ENCODE measurements at regions of chr17 and their contacts with region 1.

Region 1: DNA sequence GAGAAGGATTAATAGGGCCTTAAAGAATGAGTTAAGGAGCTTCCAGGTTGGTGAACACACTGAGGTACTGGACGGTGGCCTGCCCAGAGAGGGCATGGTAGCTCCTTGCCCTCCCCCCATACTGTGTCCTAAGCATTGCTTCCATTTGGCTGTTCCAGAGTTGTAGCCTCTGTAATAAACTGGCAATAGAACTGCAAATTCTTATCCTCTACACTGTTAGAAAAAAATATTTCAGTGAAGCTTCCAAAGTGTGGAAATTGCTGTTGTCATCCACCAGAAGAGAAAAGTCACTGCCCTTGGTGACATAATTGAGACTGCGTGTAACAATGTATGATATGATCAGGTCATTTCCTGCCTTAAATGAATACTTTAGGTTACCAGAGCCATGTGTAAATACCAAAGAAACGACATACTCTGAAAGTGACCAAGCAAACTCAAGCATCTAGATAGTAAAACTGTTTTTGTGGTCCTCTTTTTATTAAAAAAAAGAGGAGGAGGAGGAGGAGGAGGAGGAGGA is 65.9 kb downstream of the CEP95 start:
- DNase-seq: no peak
- ATAC-seq: peak; percentile 92
- H3K4me3 Mint-ChIP-seq: peak overlapping the region; percentile 10
- H3K27ac Mint-ChIP-seq: peak overlapping the region; percentile 73
- H3K4me1 Mint-ChIP-seq: peaks cover 12% of the 10 kb centered on the region
- H3K27me3 Mint-ChIP-seq: no peaks in the 10 kb centered on the region

Region 2: GRCh38 chr17:64635647-64636307 is 63.1 kb after region 1 on chr17:
- CTCF ChIA-PET with region 1: interaction called, 4 read pairs
- POLR2A ChIA-PET with region 1: no interaction called
- intact Hi-C with region 1: loop called in 1 of 2 experiments (anchors 1 kb)
- DNase-seq: peak; percentile 29
- ATAC-seq: peak; percentile 79
- H3K4me3 Mint-ChIP-seq: no peak overlapping the region
- H3K27ac Mint-ChIP-seq: peak overlapping the region; percentile 79
- H3K4me1 Mint-ChIP-seq: peaks cover 54% of the 10 kb centered on the region
- H3K27me3 Mint-ChIP-seq: no peaks in the 10 kb centered on the region

Region 3: DNA sequence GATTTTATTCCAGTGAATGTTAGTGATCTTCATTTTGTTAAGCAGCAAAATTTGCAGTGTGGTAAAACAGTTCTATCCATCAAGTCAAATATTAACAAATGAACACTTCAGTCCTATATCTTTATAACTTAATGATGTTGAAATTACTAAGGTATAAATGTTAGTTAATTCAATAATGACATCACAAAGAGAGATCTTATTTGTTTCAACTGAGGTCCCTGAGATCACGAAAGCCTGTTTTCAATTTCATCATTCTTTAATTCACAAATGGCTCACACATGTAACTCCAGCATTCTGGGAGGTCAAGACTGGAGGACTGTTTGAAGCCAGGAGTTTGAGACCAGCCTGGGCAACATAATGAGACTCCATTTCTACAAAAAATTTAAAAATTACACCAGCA is 75.5 kb after region 1 on chr17:
- CTCF ChIA-PET with region 1: interaction called, 6 read pairs
- POLR2A ChIA-PET with region 1: no interaction called
- intact Hi-C with region 1: loop called (anchors 1 to 5 kb)
- DNase-seq: no peak
- ATAC-seq: no peak
- H3K4me3 Mint-ChIP-seq: no peak overlapping the region
- H3K27ac Mint-ChIP-seq: peak overlapping the region; percentile 89
- H3K4me1 Mint-ChIP-seq: peaks cover 37% of the 10 kb centered on the region
- H3K27me3 Mint-ChIP-seq: no peaks in the 10 kb centered on the region

Region 4: DNA sequence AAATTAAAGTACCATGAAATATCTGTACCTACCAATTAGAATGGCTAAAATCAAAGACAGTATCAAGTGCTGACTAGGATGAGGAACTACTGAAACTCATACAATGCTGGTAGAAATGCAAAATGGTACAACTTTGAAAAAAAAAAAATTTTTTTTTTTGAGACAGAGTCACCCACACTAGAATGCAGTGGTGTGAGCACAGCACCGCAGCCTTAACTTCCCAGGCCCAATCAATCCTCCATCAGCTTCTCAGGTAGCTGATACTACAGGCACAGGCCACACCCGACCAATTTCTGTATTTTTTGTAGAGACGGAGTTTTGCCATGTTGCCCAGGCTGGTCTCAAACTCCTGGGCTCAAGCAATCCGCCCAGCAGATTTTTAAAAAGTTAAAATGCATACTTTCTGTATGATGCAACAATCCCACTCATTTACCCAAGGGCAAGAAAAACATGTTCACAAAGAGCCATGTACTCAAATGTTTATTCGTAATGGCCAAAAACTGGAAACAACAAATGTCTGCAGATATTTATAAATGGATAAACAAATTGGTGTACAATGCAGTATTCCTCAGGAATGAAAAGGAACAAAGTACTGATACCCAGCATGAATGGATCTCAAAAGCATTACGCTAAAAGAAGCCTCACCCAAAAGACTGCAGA is 80.8 kb after region 1 on chr17:
- CTCF ChIA-PET with region 1: interaction called, 6 read pairs
- POLR2A ChIA-PET with region 1: no interaction called
- intact Hi-C with region 1: loop called (anchors 1 to 5 kb)
- DNase-seq: no peak
- ATAC-seq: no peak
- H3K4me3 Mint-ChIP-seq: no peak overlapping the region
- H3K27ac Mint-ChIP-seq: peak overlapping the region; percentile 43
- H3K4me1 Mint-ChIP-seq: peaks cover 42% of the 10 kb centered on the region
- H3K27me3 Mint-ChIP-seq: no peaks in the 10 kb centered on the region

Measured in activated CD4-positive, alpha-beta T cell treated with anti-CD3 and anti-CD28 coated beads for 36 hours (primary cell).